ENCODE measurements at regions of chr12 and their contacts with region 1.

Region 1: DNA sequence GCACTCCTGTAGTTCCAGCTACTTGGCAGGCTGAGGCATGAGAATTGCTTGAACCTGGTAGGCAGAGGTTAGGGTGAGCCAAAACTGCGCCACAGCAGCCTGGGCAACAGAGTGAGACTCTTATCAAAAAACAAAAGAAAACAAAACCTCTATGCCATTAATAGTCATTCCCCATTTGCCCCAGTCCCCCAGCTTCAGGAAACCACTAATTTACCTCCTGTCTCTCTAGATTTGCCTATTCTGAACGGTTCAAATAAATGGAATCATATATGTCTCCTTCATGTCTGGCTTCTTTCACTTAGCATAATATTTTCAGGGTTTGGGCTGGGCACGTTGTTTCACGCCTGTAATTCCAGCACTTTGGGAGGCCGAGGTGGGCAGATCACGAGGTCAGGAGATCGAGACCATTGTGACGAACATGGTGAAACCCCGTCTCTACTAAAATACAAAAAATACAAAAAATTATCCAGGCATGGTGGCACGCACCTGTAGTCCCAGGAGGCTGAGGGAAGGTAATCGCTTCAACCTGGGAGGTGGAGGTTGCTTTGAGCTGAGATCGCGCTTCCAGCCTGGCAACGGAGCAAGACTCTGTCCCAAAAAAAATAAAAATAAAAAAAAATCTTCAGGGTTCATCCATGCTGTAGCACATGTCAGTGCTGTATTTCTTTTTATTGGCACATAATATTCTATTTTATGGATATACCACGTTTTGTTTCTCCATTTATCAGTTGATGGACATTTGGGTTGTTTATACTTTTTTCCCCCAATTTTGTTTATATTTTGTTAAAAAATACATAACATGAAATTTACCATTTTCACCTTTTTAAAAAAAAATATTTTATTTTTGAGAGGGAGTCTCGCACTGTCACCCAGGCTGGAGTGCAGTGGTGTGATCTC is 31.9 kb downstream of the KNTC1 start:
- DNase-seq: no peak
- H3K4me3 ChIP-seq: no peak overlapping the region
- H3K4me1 ChIP-seq: no peaks in the 10 kb centered on the region
- H3K27me3 ChIP-seq: no peaks in the 10 kb centered on the region

Region 2: GRCh38 chr12:123223241-123223668 is 664.3 kb after region 1 on chr12:
- in situ Hi-C with region 1: loop called (anchors 25 kb)
- DNase-seq: no peak
- H3K4me3 ChIP-seq: no peak overlapping the region
- H3K4me1 ChIP-seq: peaks cover 10% of the 10 kb centered on the region
- H3K27me3 ChIP-seq: no peaks in the 10 kb centered on the region

Measured in HAP-1 (cell line).